Posterior cingulate gyrus (tissue), 11 donors: ENCODE measurements at regions of chr7 and their contacts with region 1.

Region 1: GRCh38 chr7:29194594-29195427 is at the start of gene CHN2:
- DNase-seq: peak; percentile 40 to 94 (median 62)

Region 2: GRCh38 chr7:29274146-29275017 is 79.6 kb after region 1 on chr7:
- intact Hi-C with region 1: loop called (anchors 5 kb)
- DNase-seq: peak in 3 of 10 donors; percentile 46 to 62 (median 50)